Esophagus muscularis mucosa (tissue), 4 donors: ENCODE measurements at regions of chr2 and their contacts with region 1.

Region 1: DNA sequence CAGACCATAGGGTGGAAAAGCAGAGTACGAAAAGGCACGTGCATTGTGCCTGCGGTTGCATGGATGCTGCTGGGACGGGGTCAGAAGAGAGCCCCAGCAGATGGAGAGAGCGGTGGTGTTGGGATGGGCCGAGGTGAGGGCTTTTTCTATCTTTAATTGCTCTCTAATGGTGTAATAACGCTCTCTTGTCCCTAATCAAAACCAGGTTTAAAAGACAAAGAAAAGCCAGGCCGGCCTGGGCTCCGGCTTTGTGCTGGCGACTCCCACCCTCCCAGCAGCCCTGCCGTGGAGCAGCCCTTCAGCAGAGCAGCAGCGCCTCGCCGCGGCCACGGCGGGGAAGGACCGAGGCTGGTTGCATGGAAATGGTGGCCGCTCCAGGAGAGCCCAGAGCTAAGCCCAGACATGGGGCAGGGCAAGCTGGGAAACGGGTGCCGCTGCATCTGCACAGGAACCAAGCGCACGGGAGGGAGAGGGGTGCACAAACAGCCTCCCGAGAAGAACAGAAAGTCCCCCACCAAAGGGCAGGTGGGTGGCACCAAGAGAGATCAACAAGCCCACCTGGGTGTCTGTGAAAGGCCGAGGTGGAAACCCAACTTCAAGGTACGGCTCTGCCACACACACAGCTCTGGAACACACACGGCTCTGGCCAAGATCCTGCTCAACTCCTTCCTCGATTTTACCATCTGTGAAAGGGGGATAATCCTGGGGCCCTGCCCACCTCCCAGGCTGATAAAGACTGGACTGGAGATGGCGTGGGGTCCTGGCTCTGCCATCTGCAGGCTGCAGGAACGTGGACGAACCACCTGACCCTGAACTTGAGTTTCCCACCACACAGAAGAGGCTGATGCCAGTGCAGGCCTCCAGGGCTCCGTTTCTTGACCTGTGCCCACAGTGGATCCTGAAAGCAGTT is 15.0 kb downstream of the HS1BP3 start:
- DNase-seq: peak; percentile 97
- H3K4me3 ChIP-seq: no peak overlapping the region
- H3K27ac ChIP-seq: peak overlapping the region; percentile 90 to 98 (median 94)
- H3K4me1 ChIP-seq: peaks cover 52 to 94% (median 92%) of the 10 kb centered on the region in 4 donors
- H3K27me3 ChIP-seq: no peaks in the 10 kb centered on the region
- CTCF ChIP-seq: peak; percentile 95 to 98 (median 98)
- EP300 ChIP-seq: no peak
- POLR2A ChIP-seq: no peak

Region 2: GRCh38 chr2:19851116-19851695 is 784.7 kb before region 1 on chr2:
- intact Hi-C with region 1: no loop called
- DNase-seq: no peak
- H3K4me3 ChIP-seq: no peak overlapping the region
- H3K27ac ChIP-seq: no peak overlapping the region
- H3K4me1 ChIP-seq: peaks cover 4 to 17% (median 9%) of the 10 kb centered on the region in 4 donors
- H3K27me3 ChIP-seq: no peaks in the 10 kb centered on the region
- CTCF ChIP-seq: no peak
- EP300 ChIP-seq: no peak
- POLR2A ChIP-seq: no peak

Region 3: GRCh38 chr2:20398956-20399567 is 236.9 kb before region 1 on chr2:
- intact Hi-C with region 1: loop called (anchors 5 kb)
- DNase-seq: no peak
- H3K4me3 ChIP-seq: no peak overlapping the region
- H3K27ac ChIP-seq: peak overlapping the region in 1 of 4 donors; percentile 21
- H3K4me1 ChIP-seq: peaks cover 0 to 41% (median 41%) of the 10 kb centered on the region in 4 donors
- H3K27me3 ChIP-seq: no peaks in the 10 kb centered on the region
- CTCF ChIP-seq: no peak
- EP300 ChIP-seq: no peak
- POLR2A ChIP-seq: no peak

Region 4: GRCh38 chr2:20444161-20444992 is 191.6 kb before region 1 on chr2:
- intact Hi-C with region 1: loop called (anchors 2 kb)
- DNase-seq: no peak
- H3K4me3 ChIP-seq: peak overlapping the region; percentile 73 to 99 (median 78)
- H3K27ac ChIP-seq: peak overlapping the region; percentile 94 to 100 (median 98)
- H3K4me1 ChIP-seq: peaks cover 9 to 33% (median 30%) of the 10 kb centered on the region in 4 donors
- H3K27me3 ChIP-seq: no peaks in the 10 kb centered on the region
- CTCF ChIP-seq: no peak
- EP300 ChIP-seq: no peak
- POLR2A ChIP-seq: no peak